ENCODE measurements at regions of chr2 and their contacts with region 1.

Region 1: GRCh38 chr2:32063310-32064161 is at the start of gene SPAST:
- DNase-seq: peak; percentile 87
- H3K4me3 ChIP-seq: peak within 1 kb of the TSS; percentile 79
- H3K27ac ChIP-seq: peak within 1 kb of the TSS; percentile 78
- H3K27me3 ChIP-seq: no peaks in the 10 kb centered on the region
- CTCF ChIP-seq: peak; percentile 49
- polyA plus RNA-seq, gene SPAST: 12.6 and 17.4 TPM in 2 replicates

Region 2: DNA sequence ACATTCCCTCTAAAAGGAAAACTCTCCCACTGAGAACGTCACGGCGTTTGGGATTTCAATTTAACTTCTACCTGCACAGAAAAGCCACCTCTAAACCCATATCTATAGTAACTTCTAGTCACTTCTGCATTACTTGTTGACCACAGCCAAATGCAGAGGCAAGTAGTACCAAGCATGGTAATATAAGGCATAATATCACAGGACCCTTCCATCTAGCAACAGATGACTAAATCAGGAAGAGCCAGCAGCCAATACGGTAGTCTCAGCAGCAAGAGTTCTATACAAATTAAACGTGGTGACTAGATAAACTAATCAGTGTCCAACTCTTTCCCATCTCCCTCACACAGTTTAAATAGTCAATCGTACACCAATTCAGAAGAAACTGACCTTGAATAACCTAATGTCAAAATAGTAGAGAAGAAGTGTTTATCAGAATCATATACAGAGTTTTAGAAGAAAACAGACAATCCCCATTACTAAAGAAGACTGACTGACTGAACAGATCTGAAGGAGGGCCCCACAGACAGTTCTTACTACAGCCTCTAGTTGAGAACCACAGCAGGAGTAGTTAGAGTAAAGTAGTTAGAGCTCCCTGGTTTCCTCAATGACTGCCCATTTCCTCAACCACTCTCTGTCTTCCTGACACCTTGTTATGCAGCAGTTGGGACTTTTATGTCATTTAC is 82.7 kb before region 1 on chr2:
- CTCF ChIA-PET with region 1: no interaction called
- POLR2A ChIA-PET with region 1: no interaction called
- DNase-seq: no peak
- H3K4me3 ChIP-seq: no peak overlapping the region
- H3K27ac ChIP-seq: no peak overlapping the region
- H3K27me3 ChIP-seq: no peaks in the 10 kb centered on the region
- CTCF ChIP-seq: no peak

Region 3: DNA sequence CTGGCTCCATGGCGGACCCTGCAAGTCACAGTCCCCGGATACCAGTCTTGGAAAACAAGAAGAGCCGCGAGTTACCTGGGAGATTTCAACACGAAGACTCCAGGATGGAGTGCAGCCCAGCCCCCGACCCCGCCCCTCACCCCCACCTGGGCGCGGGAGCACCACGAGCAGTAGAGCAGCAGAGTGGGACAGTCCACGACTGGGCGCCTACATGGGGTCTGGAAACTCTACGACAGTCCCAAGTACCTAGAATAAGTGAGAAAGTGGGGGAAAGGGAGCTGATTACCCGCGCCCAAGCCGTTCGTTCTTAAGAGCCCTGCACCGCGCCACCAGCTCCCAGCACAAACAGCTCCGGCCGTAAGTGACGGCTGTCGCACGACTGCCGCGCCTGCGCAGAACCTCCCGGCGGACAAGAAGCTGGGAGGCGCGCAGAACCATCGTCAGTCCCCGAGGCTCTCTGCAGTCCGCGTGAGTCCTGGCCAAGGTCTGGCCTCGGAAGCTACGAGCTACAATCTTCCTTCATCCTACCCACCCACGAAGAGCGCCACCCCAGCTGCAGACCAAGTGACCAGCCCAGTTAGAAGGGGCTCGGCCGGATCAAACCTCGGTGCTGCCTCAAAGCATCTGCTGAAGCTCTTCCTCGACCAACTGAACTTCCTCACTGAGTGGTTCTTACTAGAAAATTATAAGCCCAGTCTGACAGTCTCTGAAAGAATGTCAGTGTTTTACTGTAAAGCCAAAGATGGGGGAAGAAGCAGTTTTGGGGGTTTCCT is 23.9 kb before region 1 on chr2 and contains the start of gene DPY30:
- CTCF ChIA-PET with region 1: interaction called, 11 read pairs
- POLR2A ChIA-PET with region 1: interaction called, 32 read pairs
- DNase-seq: peak; percentile 86
- H3K4me3 ChIP-seq: peak within 1 kb of the TSS; percentile 89
- H3K27ac ChIP-seq: peak within 1 kb of the TSS; percentile 88
- H3K27me3 ChIP-seq: no peaks in the 10 kb centered on the region
- CTCF ChIP-seq: no peak
- polyA plus RNA-seq, gene DPY30: 79.1 and 104 TPM in 2 replicates

Region 4: GRCh38 chr2:32289165-32289999 is 225.8 kb after region 1 on chr2:
- CTCF ChIA-PET with region 1: no interaction called
- POLR2A ChIA-PET with region 1: no interaction called
- DNase-seq: peak; percentile 27
- H3K4me3 ChIP-seq: no peak overlapping the region
- H3K27ac ChIP-seq: no peak overlapping the region
- H3K27me3 ChIP-seq: no peaks in the 10 kb centered on the region
- CTCF ChIP-seq: no peak

Region 5: DNA sequence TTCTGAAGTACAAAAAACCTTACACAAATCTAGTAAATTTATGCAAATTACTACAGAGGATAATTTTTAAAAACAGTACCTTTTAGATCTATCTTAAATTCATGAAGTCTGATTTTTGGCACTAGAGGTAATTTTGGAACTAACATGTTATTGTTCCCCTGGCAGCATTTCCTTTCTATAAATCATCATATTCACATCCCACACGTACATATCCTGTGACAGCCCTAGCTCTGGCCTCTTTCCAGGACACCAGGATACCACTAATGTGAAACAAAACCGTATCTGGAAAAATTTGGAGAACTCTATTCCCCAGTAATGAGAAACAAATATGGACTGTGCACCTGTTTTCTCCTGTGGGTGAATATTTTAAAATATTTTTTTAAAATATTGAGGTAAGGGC is 279.3 kb after region 1 on chr2:
- CTCF ChIA-PET with region 1: no interaction called
- POLR2A ChIA-PET with region 1: no interaction called
- DNase-seq: no peak
- H3K4me3 ChIP-seq: no peak overlapping the region
- H3K27ac ChIP-seq: no peak overlapping the region
- H3K27me3 ChIP-seq: no peaks in the 10 kb centered on the region
- CTCF ChIP-seq: no peak

Measured in AG04450 (cell line).